ENCODE measurements at regions of chr11 and their contacts with region 1.

Region 1: DNA sequence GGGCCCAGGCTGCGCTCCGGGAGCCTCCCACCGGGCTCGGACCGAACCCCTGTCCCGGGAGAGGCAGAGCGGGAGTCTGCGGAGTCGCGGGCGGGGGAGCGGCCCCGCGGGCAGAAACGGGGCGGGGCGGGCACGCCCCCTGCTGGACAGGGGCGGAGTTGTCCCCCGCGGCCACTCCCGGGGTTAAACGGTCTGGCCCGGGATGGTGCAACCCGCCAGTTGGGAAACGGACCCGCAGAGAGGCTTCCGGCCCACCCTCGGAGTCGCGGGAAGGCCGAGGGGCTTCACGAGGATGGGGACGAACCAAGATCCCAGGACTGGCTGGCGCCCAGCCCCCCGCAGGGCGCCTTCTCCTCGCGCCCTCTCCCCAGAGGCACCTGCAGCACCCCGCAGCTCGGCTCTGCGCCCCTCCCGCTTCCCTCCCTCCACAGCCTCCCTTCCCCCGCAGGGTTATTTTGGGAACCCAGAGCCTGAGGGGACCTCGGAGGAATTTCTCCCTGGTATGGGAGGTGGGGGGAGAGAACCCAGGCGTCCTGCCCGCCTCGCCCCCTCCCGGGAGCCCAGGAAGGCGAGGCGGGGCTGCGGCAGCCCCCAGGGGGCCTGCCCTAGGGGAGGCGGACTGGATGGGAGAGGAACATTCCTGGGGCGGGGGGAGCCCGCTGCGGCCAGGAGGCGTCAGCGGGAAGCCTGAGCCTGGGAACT is 902 bp downstream of the RASGRP2 start:
- DNase-seq: peak; percentile 48 to 92
- ATAC-seq: peak; percentile 35 to 74
- H3K4me3 ChIP-seq: peak overlapping the region; percentile 61
- H3K27ac ChIP-seq: peak overlapping the region; percentile 62 to 83
- H3K4me1 ChIP-seq: peaks cover 28% of the 10 kb centered on the region
- CTCF ChIP-seq: peak; percentile 85
- EP300 ChIP-seq: no peak
- POLR2A ChIP-seq: no peak
- RAD21 ChIP-seq: peak; percentile 38 to 68

Region 2: DNA sequence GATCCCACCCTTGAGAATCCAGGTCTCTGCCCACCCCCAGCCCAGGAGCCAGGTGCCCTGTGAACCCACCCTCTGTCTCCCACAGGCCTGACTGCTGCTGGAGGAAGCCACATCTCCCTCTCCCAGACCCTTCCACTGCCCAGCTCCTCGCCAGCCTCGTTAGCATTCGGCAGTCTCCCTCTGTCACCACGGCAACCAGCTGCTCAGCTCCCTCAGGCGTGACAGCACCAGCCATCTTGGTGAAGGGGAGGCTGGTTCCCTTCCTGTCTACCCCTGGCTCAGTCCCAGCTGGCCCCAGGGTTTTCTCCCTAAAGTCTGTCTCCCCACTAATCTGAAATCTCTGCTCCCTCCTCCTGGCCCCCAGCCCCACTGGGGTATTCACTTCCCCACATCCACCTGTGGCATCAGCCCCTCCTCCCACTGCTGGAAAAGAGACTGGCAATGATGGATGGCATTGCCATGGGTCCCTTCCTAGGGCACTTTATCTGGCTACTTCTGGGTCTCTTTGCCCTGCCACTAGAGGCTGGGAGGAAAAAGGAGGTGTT is 48.1 kb before region 1 on chr11:
- CTCF ChIA-PET with region 1: interaction called, 57 read pairs
- POLR2A ChIA-PET with region 1: no interaction called
- DNase-seq: no peak
- ATAC-seq: no peak
- H3K4me3 ChIP-seq: no peak overlapping the region
- H3K27ac ChIP-seq: no peak overlapping the region
- H3K4me1 ChIP-seq: no peaks in the 10 kb centered on the region
- CTCF ChIP-seq: no peak
- EP300 ChIP-seq: no peak
- POLR2A ChIP-seq: no peak
- RAD21 ChIP-seq: no peak

Region 3: GRCh38 chr11:64703048-64703447 is 40.0 kb before region 1 on chr11:
- CTCF ChIA-PET with region 1: interaction called, 19 read pairs
- POLR2A ChIA-PET with region 1: no interaction called
- DNase-seq: no peak
- ATAC-seq: no peak
- H3K4me3 ChIP-seq: no peak overlapping the region
- H3K27ac ChIP-seq: no peak overlapping the region
- H3K4me1 ChIP-seq: no peaks in the 10 kb centered on the region
- CTCF ChIP-seq: no peak
- EP300 ChIP-seq: no peak
- POLR2A ChIP-seq: no peak
- RAD21 ChIP-seq: no peak

Region 4: GRCh38 chr11:64713031-64713780 is 29.8 kb before region 1 on chr11:
- CTCF ChIA-PET with region 1: interaction called, 21 read pairs
- POLR2A ChIA-PET with region 1: no interaction called
- DNase-seq: peak in 1 of 2 experiments; percentile 48
- ATAC-seq: 0 out of 6 replicates have a peak, but pooled peaks of 1 of the 2 experiments have one; percentile 4
- H3K4me3 ChIP-seq: peak overlapping the region; percentile 33
- H3K27ac ChIP-seq: peak overlapping the region in 1 of 2 experiments; percentile 20; a peak in 1 of 6 replicates
- H3K4me1 ChIP-seq: peaks cover 13% of the 10 kb centered on the region; the same call in 2 of the 3 replicates
- CTCF ChIP-seq: no peak
- EP300 ChIP-seq: no peak
- POLR2A ChIP-seq: no peak
- RAD21 ChIP-seq: no peak

Region 5: GRCh38 chr11:64729851-64730382 is 13.1 kb before region 1 on chr11:
- CTCF ChIA-PET with region 1: interaction called, 97 read pairs
- POLR2A ChIA-PET with region 1: no interaction called
- DNase-seq: no peak
- ATAC-seq: peak; percentile 63 to 82; a peak in 5 of 6 replicates
- H3K4me3 ChIP-seq: no peak overlapping the region
- H3K27ac ChIP-seq: no peak overlapping the region
- H3K4me1 ChIP-seq: peaks cover 5% of the 10 kb centered on the region; the same call in 2 of the 3 replicates
- CTCF ChIP-seq: no peak
- EP300 ChIP-seq: no peak
- POLR2A ChIP-seq: no peak
- RAD21 ChIP-seq: no peak

Region 6: DNA sequence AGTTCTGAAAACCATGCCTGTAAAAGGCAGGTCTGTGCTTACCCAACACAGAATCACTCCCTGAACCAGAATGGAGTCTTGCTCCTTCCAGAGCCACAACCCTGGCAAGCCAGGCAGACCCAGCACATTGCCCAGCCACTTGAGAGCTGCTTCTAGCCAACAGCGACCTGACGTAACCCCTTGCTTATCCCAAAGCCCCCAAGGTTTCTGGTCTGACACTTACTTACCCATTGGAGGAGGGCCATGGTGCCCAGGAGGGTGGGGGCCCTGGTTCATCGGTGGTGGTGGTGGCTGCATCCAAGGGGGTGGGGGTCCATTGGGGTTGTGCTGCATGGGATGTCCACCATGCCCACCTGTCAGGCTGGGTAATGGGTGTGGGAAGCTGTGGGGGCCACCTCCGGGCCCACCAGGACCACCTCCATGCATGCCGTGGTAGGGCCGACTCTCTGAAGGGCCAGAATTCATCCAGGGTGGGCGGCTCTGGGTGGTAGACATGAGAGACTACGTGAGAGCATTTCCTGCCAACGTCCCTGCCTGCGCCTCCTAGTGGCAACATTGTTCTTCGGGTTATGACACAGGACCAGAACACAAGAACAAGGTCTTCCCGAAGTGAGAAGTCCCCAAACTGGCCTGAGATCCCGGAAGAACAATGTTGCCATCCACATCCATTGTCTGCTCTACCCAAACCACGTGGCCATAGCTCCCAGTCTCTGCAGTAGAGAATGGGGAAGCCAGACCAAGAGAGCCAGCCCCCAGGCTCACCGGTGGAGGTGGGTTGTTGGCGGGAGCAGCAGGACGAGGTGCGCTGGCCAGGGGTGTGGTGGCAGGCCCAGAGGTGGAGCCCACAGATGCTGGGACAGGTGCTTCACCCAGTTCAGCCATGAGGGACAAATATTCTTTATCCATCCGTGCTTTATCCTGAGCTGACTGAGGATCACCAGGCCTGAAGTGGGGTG is 24.6 kb after region 1 on chr11:
- CTCF ChIA-PET with region 1: interaction called, 104 read pairs
- POLR2A ChIA-PET with region 1: no interaction called
- DNase-seq: peak in 1 of 2 experiments; percentile 82
- ATAC-seq: peak; percentile 66 to 79; a peak in 5 of 6 replicates
- H3K4me3 ChIP-seq: no peak overlapping the region
- H3K27ac ChIP-seq: no peak overlapping the region
- H3K4me1 ChIP-seq: peaks cover 10% of the 10 kb centered on the region; the same call in 2 of the 3 replicates
- CTCF ChIP-seq: peak; percentile 74
- EP300 ChIP-seq: no peak
- POLR2A ChIP-seq: no peak
- RAD21 ChIP-seq: 0 out of 5 replicates have a peak, but pooled peaks of 1 of the 2 experiments have one; percentile 14

Region 7: GRCh38 chr11:64778508-64779346 is 35.7 kb after region 1 on chr11 and contains the start of gene SF1:
- CTCF ChIA-PET with region 1: interaction called, 10 read pairs
- POLR2A ChIA-PET with region 1: no interaction called
- DNase-seq: peak; percentile 99 to 100
- ATAC-seq: peak; percentile 91 to 96
- H3K4me3 ChIP-seq: peak within 1 kb of the TSS; percentile 90
- H3K27ac ChIP-seq: peak within 1 kb of the TSS; percentile 98 to 99
- H3K4me1 ChIP-seq: peaks cover 32% of the 10 kb centered on the region
- CTCF ChIP-seq: no peak
- EP300 ChIP-seq: no peak
- POLR2A ChIP-seq: peak; percentile 61
- RAD21 ChIP-seq: no peak
- polyA plus RNA-seq, gene SF1: 88.8 and 104 TPM in 2 replicates

Region 8: GRCh38 chr11:64834031-64834722 is 91.1 kb after region 1 on chr11:
- CTCF ChIA-PET with region 1: no interaction called
- POLR2A ChIA-PET with region 1: no interaction called
- DNase-seq: no peak
- ATAC-seq: peak in 1 of 2 experiments; percentile 10; a peak in 3 of 6 replicates
- H3K4me3 ChIP-seq: no peak overlapping the region
- H3K27ac ChIP-seq: peak overlapping the region in 1 of 2 experiments; percentile 68; a peak in 2 of 6 replicates
- H3K4me1 ChIP-seq: peaks cover 17% of the 10 kb centered on the region
- CTCF ChIP-seq: no peak
- EP300 ChIP-seq: no peak
- POLR2A ChIP-seq: no peak
- RAD21 ChIP-seq: no peak